Activated naive CD8-positive, alpha-beta T cell treated with anti-CD3 and anti-CD28 coated beads, Interleukin-2, amount 10 ng/mL, durations not matched to agents 7 days and 5 days (primary cell): ENCODE measurements at regions of chr12 and their contacts with region 1.

Region 1: DNA sequence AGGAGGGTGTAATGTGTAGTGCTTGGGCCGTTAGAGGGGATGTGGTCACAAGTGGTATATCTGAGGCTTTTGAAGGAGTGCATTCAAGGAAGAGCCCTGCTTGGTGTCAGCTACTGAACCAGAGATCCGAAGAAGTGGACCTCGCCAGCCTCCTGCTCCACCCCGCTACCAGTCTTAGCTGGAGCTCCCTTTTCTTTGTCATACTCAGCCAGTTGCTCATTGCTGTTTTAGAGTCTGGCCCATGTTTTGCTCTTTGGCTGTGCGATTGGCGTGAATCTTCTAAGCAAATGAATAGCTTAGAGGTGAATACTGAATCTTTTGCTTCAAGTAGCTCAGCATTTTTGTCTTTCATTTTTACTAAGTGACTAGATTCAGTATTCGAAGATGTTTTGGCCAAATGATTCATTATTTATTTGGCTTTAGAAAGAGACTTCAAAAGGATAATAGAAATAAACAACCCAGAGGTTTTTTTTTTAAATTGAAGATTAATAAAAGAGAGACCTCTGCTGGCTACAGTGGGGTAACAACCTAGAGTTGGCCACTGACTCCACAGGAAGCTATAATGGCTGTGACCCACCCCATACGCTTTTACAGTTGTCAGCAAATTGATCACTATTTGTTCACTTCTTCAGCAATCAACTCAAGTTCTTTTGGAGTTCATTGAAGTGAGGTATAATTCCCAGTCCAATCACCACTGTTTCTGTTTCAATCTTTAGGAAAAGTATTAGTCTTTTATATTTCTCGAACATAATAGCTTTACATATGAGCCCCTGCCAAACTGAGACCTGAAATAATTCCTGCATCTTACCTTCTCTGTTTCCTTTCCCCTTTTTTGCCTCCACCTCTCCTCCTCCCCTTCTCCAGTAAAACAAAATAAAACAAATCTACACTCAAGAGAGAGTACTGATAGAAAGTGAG is 19.9 kb downstream of the CDKN1B start:
- DNase-seq: peak; percentile 61
- ATAC-seq: peak; percentile 95
- H3K4me3 Mint-ChIP-seq: peak overlapping the region; percentile 77
- H3K27ac Mint-ChIP-seq: peak overlapping the region; percentile 93
- H3K4me1 Mint-ChIP-seq: peaks cover 55% of the 10 kb centered on the region
- H3K27me3 Mint-ChIP-seq: no peaks in the 10 kb centered on the region

Region 2: GRCh38 chr12:12376646-12377448 is 360.2 kb before region 1 on chr12:
- POLR2A ChIA-PET with region 1: interaction called, 17 read pairs
- DNase-seq: no peak
- ATAC-seq: peak; percentile 68
- H3K4me3 Mint-ChIP-seq: no peak overlapping the region
- H3K27ac Mint-ChIP-seq: peak overlapping the region; percentile 39
- H3K4me1 Mint-ChIP-seq: peaks cover 20% of the 10 kb centered on the region
- H3K27me3 Mint-ChIP-seq: no peaks in the 10 kb centered on the region

Region 3: DNA sequence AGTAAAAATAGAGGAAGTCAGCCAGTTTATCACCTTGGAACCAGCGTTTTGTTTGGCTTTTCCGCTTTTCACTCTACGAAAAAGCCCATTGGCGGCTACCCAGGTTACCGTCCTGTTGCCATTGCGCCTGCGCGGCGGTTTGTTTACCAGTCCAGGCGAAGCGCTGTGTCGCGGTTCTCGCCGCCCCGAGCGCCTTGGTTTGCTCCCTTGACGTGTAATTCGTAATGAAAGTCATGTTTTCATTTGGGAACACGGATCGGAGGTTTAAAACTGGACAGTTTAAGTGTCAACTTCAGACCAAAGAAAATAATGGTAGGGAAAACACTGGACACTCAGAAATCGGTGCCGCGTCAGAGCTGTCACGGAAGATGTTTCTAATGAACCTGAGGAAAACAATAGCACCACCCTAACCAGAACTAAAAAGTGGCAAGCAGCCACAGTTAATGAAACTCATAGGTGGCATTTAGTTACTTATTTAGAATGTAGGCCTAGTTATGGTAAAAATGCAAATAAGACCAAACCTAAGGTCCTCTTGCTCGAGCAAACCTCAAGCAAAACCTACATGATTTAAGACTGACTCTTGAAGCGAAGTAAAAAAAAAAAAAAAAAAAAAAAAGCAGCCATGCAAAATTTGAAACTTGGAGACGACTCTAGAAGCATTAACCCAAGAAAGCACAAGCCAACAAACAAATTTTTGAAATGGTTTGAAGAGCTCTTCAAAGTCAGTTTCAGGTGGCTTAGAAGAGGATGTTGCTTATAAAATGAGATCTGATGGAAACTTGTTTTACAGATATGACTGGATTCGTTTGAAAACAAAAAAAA is 40.2 kb before region 1 on chr12:
- POLR2A ChIA-PET with region 1: interaction called, 17 read pairs
- DNase-seq: peak; percentile 93
- ATAC-seq: peak; percentile 86
- H3K4me3 Mint-ChIP-seq: peak overlapping the region; percentile 95
- H3K27ac Mint-ChIP-seq: peak overlapping the region; percentile 99
- H3K4me1 Mint-ChIP-seq: peaks cover 41% of the 10 kb centered on the region
- H3K27me3 Mint-ChIP-seq: no peaks in the 10 kb centered on the region

Region 4: GRCh38 chr12:12716793-12717585 is 20.0 kb before region 1 on chr12 and contains the start of gene CDKN1B:
- POLR2A ChIA-PET with region 1: interaction called, 240 read pairs
- DNase-seq: peak; percentile 88
- ATAC-seq: peak; percentile 55
- H3K4me3 Mint-ChIP-seq: peak within 1 kb of the TSS; percentile 96
- H3K27ac Mint-ChIP-seq: peak within 1 kb of the TSS; percentile 98
- H3K4me1 Mint-ChIP-seq: peaks cover 41% of the 10 kb centered on the region
- H3K27me3 Mint-ChIP-seq: no peaks in the 10 kb centered on the region
- total RNA-seq, gene CDKN1B: 135 to 136 TPM

Region 5: GRCh38 chr12:12724661-12725545 is 12.1 kb before region 1 on chr12:
- POLR2A ChIA-PET with region 1: interaction called, 240 read pairs
- DNase-seq: peak; percentile 89
- ATAC-seq: peak; percentile 51
- H3K4me3 Mint-ChIP-seq: peak overlapping the region; percentile 85
- H3K27ac Mint-ChIP-seq: peak overlapping the region; percentile 94
- H3K4me1 Mint-ChIP-seq: peaks cover 30% of the 10 kb centered on the region
- H3K27me3 Mint-ChIP-seq: no peaks in the 10 kb centered on the region

Region 6: DNA sequence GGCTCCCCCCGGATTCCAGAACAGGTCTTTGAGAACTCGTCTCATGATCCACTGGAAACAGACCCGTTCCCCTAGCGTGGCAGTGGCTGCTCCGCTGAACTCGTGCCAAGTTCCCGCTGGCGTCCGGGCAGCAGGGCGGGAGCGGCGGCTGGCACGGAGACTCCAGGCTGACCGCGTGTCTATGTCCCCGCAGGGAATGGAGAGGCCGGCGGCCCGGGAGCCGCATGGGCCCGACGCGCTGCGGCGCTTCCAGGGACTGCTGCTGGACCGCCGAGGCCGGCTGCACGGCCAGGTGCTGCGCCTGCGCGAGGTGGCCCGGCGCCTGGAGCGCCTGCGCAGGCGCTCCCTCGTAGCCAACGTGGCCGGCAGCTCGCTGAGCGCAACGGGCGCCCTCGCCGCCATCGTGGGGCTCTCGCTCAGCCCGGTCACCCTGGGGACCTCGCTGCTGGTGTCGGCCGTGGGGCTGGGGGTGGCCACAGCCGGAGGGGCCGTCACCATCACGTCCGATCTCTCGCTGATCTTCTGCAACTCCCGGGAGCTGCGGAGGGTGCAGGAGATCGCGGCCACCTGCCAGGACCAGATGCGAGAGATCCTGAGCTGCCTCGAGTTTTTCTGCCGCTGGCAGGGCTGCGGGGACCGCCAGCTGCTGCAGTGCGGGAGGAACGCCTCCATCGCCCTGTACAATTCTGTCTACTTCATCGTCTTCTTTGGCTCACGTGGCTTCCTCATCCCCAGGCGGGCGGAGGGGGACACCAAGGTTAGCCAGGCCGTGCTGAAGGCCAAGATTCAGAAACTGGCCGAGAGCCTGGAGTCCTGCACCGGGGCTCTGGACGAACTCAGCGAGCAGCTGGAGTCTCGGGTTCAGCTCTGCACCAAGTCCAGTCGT is 49.9 kb after region 1 on chr12:
- POLR2A ChIA-PET with region 1: interaction called, 16 read pairs
- DNase-seq: peak; percentile 82
- ATAC-seq: peak; percentile 93
- H3K4me3 Mint-ChIP-seq: peak overlapping the region; percentile 82
- H3K27ac Mint-ChIP-seq: peak overlapping the region; percentile 83
- H3K4me1 Mint-ChIP-seq: peaks cover 33% of the 10 kb centered on the region
- H3K27me3 Mint-ChIP-seq: no peaks in the 10 kb centered on the region